ENCODE measurements at regions of chr15 and their contacts with region 1.

Region 1: GRCh38 chr15:70763120-70763878 is at the start of gene UACA:
- DNase-seq: peak; percentile 98
- H3K4me3 Mint-ChIP-seq: peak within 1 kb of the TSS; percentile 93
- H3K27ac Mint-ChIP-seq: peak within 1 kb of the TSS; percentile 85
- H3K4me1 Mint-ChIP-seq: peaks cover 20% of the 10 kb centered on the region
- H3K27me3 Mint-ChIP-seq: no peaks in the 10 kb centered on the region
- CTCF ChIP-seq: no peak
- total RNA-seq, gene UACA: 32.6 and 37.0 TPM in 2 replicates

Region 2: DNA sequence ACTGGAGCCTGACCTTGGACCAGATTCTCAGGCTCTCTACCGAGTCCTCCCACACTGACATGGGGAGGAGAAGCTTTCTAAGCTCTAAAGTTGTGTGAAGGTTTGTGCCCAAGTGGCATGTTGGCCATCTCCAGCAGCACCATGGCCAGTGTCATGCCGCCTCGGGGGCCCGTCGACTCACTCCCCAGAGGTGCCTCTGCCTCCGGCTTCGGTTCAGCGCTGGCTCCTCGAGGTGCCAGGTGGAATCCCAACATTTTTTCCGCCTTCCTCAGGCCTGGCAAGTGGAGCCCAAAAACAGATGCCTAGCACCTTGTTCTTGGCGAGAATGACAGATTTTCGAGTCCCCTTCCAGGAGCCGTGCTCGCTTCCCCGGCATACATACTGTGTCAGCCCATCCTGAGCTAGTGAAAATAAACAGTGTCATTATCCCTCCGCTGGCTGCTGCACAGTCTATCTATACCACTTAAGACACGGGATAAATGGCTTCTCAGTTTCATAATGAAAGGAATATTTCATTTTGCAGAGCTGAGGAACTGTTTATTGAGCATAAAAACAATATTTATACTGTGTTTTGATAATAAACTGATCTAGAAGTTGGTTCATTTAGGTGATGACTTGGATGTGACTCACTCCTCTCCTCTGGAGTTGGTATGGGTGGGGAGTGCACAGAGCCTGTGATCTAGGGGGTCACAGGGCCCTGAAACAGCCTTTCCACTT is 337.0 kb before region 1 on chr15:
- CTCF ChIA-PET with region 1: no interaction called
- POLR2A ChIA-PET with region 1: no interaction called
- intact Hi-C with region 1: no loop called
- DNase-seq: peak; percentile 59
- H3K4me3 Mint-ChIP-seq: no peak overlapping the region
- H3K27ac Mint-ChIP-seq: no peak overlapping the region
- H3K4me1 Mint-ChIP-seq: peaks cover 26% of the 10 kb centered on the region
- H3K27me3 Mint-ChIP-seq: peaks cover 34% of the 10 kb centered on the region
- CTCF ChIP-seq: no peak

Region 3: DNA sequence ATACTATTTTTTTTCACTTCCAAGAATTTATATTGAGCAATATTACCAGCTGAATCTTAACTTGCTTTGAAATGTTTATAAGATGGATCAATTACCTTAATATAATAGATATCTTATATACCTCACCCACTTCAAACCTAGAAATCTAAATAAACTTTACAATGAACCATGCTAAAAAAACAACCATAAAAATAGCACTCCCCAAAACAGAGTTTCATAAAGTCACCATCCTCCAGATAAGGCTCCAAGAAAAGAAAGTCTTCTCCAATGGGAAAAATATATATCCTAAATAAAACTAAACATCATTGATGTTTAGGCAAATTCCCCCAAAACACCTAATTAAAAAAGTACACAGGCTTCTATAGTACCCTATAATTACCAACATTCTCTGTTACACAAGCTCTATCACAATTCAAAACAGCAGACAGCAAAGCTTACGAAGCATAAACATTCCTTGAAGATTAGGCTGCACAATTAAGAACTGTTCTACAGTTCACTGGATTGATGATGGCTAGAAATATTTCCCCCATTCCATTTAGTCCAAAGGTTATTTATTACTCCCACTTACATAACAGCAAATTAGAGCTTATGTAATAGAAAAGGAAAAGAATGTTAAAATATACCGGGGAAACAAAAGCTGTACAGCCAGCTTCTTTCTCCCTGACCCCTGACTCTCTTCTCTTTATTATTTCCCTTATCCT is 49.4 kb before region 1 on chr15:
- CTCF ChIA-PET with region 1: no interaction called
- POLR2A ChIA-PET with region 1: interaction called, 10 read pairs
- intact Hi-C with region 1: no loop called
- DNase-seq: no peak
- H3K4me3 Mint-ChIP-seq: no peak overlapping the region
- H3K27ac Mint-ChIP-seq: peak overlapping the region; percentile 40
- H3K4me1 Mint-ChIP-seq: peaks cover 27% of the 10 kb centered on the region
- H3K27me3 Mint-ChIP-seq: no peaks in the 10 kb centered on the region
- CTCF ChIP-seq: no peak

Region 4: GRCh38 chr15:70741827-70742280 is 21.4 kb before region 1 on chr15:
- CTCF ChIA-PET with region 1: interaction called, 3 read pairs
- POLR2A ChIA-PET with region 1: interaction called, 20 read pairs
- intact Hi-C with region 1: no loop called
- DNase-seq: peak; percentile 78
- H3K4me3 Mint-ChIP-seq: peak overlapping the region; percentile 23
- H3K27ac Mint-ChIP-seq: peak overlapping the region; percentile 59
- H3K4me1 Mint-ChIP-seq: peaks cover 31% of the 10 kb centered on the region
- H3K27me3 Mint-ChIP-seq: no peaks in the 10 kb centered on the region
- CTCF ChIP-seq: no peak

Region 5: DNA sequence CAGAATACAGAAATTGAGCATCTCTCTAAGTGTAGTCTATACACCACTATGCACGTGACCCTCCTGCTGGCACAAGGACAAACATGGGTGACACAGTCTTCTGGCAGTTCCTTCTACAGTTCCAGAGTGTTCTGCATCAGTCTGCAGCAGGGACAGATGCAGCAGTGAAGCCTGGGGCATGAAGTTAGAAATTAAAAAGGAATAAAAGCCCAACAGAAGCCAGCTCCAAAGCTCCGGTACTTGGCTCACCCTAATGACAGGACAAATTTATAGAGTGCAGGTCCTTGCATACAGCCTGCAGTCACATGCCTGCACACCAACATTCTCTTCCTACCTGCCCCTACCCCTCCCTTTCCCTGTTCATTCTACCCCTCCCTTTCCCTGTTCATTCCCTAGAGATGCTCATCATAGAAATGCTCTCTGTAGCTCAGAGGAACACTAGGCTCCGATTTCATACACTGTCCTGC is 15.0 kb before region 1 on chr15:
- CTCF ChIA-PET with region 1: interaction called, 7 read pairs
- POLR2A ChIA-PET with region 1: interaction called, 29 read pairs
- intact Hi-C with region 1: no loop called
- DNase-seq: no peak
- H3K4me3 Mint-ChIP-seq: no peak overlapping the region
- H3K27ac Mint-ChIP-seq: no peak overlapping the region
- H3K4me1 Mint-ChIP-seq: peaks cover 7% of the 10 kb centered on the region
- H3K27me3 Mint-ChIP-seq: no peaks in the 10 kb centered on the region
- CTCF ChIP-seq: no peak

Region 6: DNA sequence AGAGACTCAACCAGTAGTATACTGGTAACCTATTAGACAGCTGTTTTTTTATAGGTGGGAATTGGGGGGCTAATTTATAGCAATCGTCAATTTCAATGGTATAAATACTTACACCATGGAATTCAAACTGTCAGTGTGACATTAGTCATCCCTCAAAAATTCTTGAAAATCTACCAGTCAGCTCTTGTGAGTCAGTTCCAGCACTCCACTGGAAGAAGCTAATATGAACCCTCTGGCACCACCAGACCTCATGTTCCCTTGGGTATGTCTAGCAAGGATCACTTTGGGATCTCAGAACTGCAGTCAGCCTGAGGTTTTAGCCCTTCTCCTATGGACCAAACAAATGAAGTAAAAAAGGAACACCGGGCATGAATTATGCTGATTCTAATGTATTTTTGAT is 11.9 kb after region 1 on chr15:
- CTCF ChIA-PET with region 1: no interaction called
- POLR2A ChIA-PET with region 1: interaction called, 19 read pairs
- intact Hi-C with region 1: no loop called
- DNase-seq: peak; percentile 55
- H3K4me3 Mint-ChIP-seq: no peak overlapping the region
- H3K27ac Mint-ChIP-seq: no peak overlapping the region
- H3K4me1 Mint-ChIP-seq: peaks cover 30% of the 10 kb centered on the region
- H3K27me3 Mint-ChIP-seq: no peaks in the 10 kb centered on the region
- CTCF ChIP-seq: no peak

Region 7: GRCh38 chr15:70799667-70800450 is 36.6 kb after region 1 on chr15:
- CTCF ChIA-PET with region 1: no interaction called
- POLR2A ChIA-PET with region 1: interaction called, 9 read pairs
- intact Hi-C with region 1: loop called (anchors 5 kb)
- DNase-seq: peak; percentile 75
- H3K4me3 Mint-ChIP-seq: no peak overlapping the region
- H3K27ac Mint-ChIP-seq: peak overlapping the region; percentile 82
- H3K4me1 Mint-ChIP-seq: peaks cover 24% of the 10 kb centered on the region
- H3K27me3 Mint-ChIP-seq: no peaks in the 10 kb centered on the region
- CTCF ChIP-seq: no peak

Region 8: GRCh38 chr15:70920981-70921696 is 157.8 kb after region 1 on chr15:
- CTCF ChIA-PET with region 1: no interaction called
- POLR2A ChIA-PET with region 1: no interaction called
- intact Hi-C with region 1: no loop called
- DNase-seq: no peak
- H3K4me3 Mint-ChIP-seq: no peak overlapping the region
- H3K27ac Mint-ChIP-seq: no peak overlapping the region
- H3K4me1 Mint-ChIP-seq: no peaks in the 10 kb centered on the region
- H3K27me3 Mint-ChIP-seq: no peaks in the 10 kb centered on the region
- CTCF ChIP-seq: no peak

Measured in MCF 10A (cell line).